ENCODE measurements at regions of chr1 and their contacts with region 1.

Region 1: DNA sequence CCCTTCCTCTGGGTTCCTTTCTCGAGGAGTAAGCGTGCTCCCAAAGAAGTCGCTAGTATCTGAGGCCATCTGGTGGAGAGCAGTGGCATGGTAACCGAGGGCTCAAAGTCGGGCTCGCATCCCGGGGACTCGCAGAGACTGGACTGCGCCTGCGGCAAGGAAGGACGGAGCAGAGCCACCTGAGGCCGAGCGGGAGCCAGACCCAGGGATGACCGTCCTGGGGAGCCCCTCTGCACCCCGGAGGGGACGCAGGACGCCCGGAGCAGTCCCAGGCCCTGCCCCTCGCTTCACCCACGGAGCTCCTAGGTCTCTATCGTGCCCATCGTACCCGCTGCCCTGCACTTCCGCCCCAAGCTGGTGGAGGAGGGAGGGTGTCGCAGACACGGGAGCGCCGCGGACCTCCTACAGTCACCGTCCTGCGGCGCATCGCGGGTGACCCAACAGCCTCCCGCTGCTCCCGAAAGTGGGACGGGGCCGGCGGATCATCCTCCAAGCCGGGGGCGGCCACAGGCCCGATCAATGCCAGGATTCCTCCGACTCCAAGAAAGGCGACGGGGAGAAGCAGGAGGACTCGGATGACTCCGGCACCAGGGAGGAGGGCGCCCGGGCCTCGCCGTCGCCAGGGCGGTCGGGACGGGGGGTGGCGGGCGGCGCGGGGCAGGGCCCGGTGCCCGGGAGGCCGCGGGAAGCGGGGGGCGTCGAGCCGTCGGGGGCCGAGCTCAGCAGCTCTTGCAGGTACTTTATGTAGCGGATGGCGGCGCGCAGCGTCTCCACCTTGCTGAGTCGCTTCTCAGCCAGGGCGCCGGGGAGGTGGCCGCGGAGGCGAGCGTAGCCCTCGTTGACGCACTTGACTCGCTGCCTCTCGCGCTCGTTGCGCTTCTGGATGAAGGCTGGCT is 2.3 kb upstream of the CACNA1S start:
- DNase-seq: peak; percentile 88
- ATAC-seq: peak; percentile 93
- H3K4me3 Mint-ChIP-seq: peak overlapping the region; percentile 86
- H3K27ac Mint-ChIP-seq: peak overlapping the region; percentile 81
- H3K4me1 Mint-ChIP-seq: peaks cover 2% of the 10 kb centered on the region
- H3K27me3 Mint-ChIP-seq: no peaks in the 10 kb centered on the region
- CTCF ChIP-seq: peak; percentile 87

Region 2: GRCh38 chr1:201023517-201023902 is 91.0 kb before region 1 on chr1 and contains the start of gene KIF21B:
- CTCF ChIA-PET with region 1: interaction called, 18 read pairs
- POLR2A ChIA-PET with region 1: no interaction called
- intact Hi-C with region 1: no loop called
- DNase-seq: peak; percentile 92
- ATAC-seq: peak; percentile 70
- H3K4me3 Mint-ChIP-seq: peak within 1 kb of the TSS; percentile 91
- H3K27ac Mint-ChIP-seq: peak within 1 kb of the TSS; percentile 97
- H3K4me1 Mint-ChIP-seq: peaks cover 60% of the 10 kb centered on the region
- H3K27me3 Mint-ChIP-seq: no peaks in the 10 kb centered on the region
- CTCF ChIP-seq: no peak
- total RNA-seq, gene KIF21B: 93.5 to 94.0 TPM

Region 3: GRCh38 chr1:201080135-201080534 is 34.3 kb before region 1 on chr1:
- CTCF ChIA-PET with region 1: interaction called, 46 read pairs
- POLR2A ChIA-PET with region 1: no interaction called
- intact Hi-C with region 1: no loop called
- DNase-seq: no peak
- ATAC-seq: no peak
- H3K4me3 Mint-ChIP-seq: no peak overlapping the region
- H3K27ac Mint-ChIP-seq: no peak overlapping the region
- H3K4me1 Mint-ChIP-seq: no peaks in the 10 kb centered on the region
- H3K27me3 Mint-ChIP-seq: no peaks in the 10 kb centered on the region
- CTCF ChIP-seq: no peak

Region 4: DNA sequence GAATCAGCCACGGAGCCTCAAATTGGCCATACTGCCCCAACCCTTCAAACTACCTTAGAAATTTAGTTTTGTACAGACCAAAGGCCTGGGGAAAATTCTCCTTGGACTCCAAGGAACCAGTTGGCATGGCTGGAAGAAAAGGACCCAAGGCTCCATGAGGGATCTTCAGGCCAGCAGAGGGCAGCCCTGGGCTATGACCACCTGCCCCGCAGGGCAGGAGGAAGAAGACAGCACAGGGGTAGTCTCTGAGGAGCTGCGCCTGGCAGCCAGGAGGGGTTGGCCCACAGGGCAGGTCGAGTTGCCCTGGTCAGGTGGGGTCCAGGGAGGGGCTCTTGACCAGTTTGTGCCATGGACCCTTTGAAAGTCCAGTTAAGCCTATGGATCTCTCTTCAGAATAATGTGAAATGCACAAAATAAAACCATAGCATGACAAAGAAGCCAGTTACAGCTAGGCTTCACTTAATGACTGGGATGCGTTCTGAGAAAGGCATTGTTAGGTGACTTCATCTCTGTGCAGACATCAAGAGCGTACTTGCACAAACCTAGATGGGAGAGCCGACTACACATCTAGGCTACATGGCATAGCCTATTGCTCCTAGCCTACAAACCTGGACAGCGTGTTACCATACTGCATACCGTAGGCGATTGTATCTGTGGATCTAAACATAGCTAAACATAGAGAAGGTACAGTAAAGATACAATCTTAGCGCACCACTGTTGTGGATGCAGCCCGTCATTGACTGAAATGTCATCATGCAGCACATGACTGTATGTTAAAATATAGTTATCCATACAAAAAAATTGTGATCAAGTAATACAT is 28.4 kb before region 1 on chr1:
- CTCF ChIA-PET with region 1: interaction called, 46 read pairs
- POLR2A ChIA-PET with region 1: no interaction called
- intact Hi-C with region 1: no loop called
- DNase-seq: peak; percentile 68
- ATAC-seq: peak; percentile 90
- H3K4me3 Mint-ChIP-seq: no peak overlapping the region
- H3K27ac Mint-ChIP-seq: no peak overlapping the region
- H3K4me1 Mint-ChIP-seq: no peaks in the 10 kb centered on the region
- H3K27me3 Mint-ChIP-seq: peaks cover 7% of the 10 kb centered on the region
- CTCF ChIP-seq: peak; percentile 60

Region 5: GRCh38 chr1:201098992-201099677 is 15.3 kb before region 1 on chr1:
- CTCF ChIA-PET with region 1: interaction called, 11 read pairs
- POLR2A ChIA-PET with region 1: interaction called, 3 read pairs
- intact Hi-C with region 1: no loop called
- DNase-seq: no peak
- ATAC-seq: no peak
- H3K4me3 Mint-ChIP-seq: no peak overlapping the region
- H3K27ac Mint-ChIP-seq: no peak overlapping the region
- H3K4me1 Mint-ChIP-seq: no peaks in the 10 kb centered on the region
- H3K27me3 Mint-ChIP-seq: no peaks in the 10 kb centered on the region
- CTCF ChIP-seq: no peak

Region 6: DNA sequence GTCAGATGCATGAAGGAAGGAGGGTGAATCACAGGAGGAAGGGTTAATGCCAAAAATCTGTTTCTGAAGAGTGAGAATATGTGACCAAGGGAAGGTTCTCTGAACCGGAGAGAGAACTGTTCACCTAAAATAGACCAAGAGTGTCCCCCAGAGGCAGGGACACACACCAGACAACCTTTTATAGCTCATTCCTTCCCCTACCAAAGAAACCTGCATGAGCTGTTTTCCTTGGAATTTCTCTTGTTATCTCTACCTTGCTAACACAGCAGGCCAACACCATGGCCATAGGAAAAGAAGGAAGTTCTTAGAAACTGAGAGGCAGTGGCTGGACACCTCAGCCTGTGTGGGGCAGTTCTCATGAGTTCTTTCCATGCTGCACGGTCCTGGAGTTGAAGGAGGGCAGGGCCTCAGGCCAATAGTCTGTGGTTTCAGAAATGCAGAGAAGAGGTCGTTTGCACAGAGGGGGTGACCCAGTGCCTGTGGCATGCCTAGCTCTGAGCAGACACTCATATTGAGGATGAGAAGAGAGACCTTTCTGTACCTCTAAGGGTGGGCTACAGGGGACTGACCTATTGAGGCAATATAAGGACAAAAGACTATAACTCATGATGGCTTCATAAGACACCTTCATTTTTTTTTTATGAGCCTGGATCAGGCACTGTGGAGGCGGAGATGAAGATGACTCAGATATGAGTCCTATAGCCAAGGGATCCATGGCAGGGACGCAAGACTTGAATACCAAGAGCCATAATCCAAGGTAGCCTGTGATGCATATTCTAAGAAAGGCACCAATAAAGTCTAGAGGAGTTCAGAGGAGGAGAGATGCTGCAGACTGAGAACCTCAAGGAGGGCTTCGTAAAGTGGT is 115.5 kb after region 1 on chr1:
- CTCF ChIA-PET with region 1: no interaction called
- POLR2A ChIA-PET with region 1: no interaction called
- intact Hi-C with region 1: no loop called
- DNase-seq: no peak
- ATAC-seq: no peak
- H3K4me3 Mint-ChIP-seq: no peak overlapping the region
- H3K27ac Mint-ChIP-seq: no peak overlapping the region
- H3K4me1 Mint-ChIP-seq: no peaks in the 10 kb centered on the region
- H3K27me3 Mint-ChIP-seq: peaks cover 8% of the 10 kb centered on the region
- CTCF ChIP-seq: no peak

Region 7: DNA sequence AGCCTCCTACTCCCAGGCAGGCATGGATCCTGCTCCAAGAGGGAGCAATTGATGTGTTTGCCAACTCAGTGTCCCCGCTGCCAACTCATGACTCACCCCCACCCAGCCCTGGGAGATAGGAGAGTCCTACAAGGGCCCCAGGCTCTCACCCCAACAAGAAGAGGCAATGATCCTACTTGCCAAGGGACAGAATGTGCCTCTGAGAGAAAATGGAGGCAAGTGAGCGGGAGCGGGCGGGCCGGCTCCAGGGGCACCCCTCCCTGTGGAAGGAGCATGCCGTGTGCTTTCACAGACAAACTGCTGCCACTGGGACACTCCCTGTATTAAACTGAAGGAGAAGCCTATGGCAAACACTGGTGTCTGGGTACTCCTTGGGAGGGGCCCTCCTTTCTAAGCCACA is 185.5 kb after region 1 on chr1:
- CTCF ChIA-PET with region 1: no interaction called
- POLR2A ChIA-PET with region 1: no interaction called
- intact Hi-C with region 1: no loop called
- DNase-seq: no peak
- ATAC-seq: no peak
- H3K4me3 Mint-ChIP-seq: no peak overlapping the region
- H3K27ac Mint-ChIP-seq: no peak overlapping the region
- H3K4me1 Mint-ChIP-seq: no peaks in the 10 kb centered on the region
- H3K27me3 Mint-ChIP-seq: peaks cover 9% of the 10 kb centered on the region
- CTCF ChIP-seq: no peak